Heart left ventricle (tissue), 16 donors: ENCODE measurements at regions of chr16 and their contacts with region 1.

Region 1: DNA sequence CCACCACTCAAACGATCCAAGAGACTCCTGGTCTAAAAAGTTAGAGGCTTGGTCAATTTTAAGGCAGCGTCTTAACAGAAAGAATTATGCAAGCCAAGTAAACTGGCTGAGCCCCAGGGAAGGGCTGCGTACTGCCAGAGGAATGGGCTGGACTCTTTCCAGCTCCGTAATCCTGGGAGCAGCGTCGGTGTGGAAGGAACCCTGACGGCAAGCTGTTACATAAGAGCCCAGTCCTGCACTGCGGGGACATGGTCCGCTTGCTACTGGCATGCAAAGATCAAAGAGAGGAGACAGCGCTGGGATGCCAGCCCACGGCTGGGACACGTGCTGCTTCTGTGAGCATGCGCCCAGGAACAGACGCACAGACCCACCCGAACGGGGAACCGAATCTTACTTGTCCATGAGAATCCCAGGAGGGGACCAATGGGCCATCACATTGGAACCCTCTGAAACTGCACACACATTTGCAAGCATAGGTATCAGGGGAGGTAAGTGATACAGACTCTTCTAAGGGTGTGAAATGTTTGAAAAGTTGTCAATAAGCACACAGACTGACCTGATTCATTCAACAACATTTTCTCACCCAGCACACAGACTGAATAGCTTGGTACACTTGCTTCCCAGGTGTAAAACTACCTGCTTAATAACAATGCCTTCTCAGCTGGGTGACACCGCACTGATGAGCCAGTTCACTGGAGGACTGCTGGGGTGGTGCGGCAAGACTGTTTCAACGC is 95.1 kb downstream of the ANKRD11 start:
- DNase-seq: peak; percentile 85 to 95 (median 91)
- ATAC-seq: peak; percentile 92 to 95 (median 94)
- H3K4me3 ChIP-seq: peak overlapping the region in 3 of 12 donors; percentile 0 to 30 (median 9)
- H3K27ac ChIP-seq: peak overlapping the region in 10 of 12 donors; percentile 32 to 83 (median 60)
- H3K4me1 ChIP-seq: peaks cover 15 to 72% (median 41%) of the 10 kb centered on the region in 12 donors
- H3K27me3 ChIP-seq: no peaks in the 10 kb centered on the region
- CTCF ChIP-seq: no peak
- POLR2A ChIP-seq: no peak

Region 2: GRCh38 chr16:89344846-89345611 is 50.3 kb before region 1 on chr16:
- intact Hi-C with region 1: loop called in 1 of 10 experiments (anchors 5 kb)
- DNase-seq: no peak
- ATAC-seq: peak in 3 of 4 donors; percentile 46 to 50 (median 49)
- H3K4me3 ChIP-seq: peak overlapping the region in 2 of 12 donors; percentile 4 to 27
- H3K27ac ChIP-seq: peak overlapping the region in 2 of 12 donors; percentile 5 to 47
- H3K4me1 ChIP-seq: peaks cover 3 to 46% (median 21%) of the 10 kb centered on the region in 12 donors
- H3K27me3 ChIP-seq: no peaks in the 10 kb centered on the region
- CTCF ChIP-seq: no peak
- POLR2A ChIP-seq: no peak

Region 3: DNA sequence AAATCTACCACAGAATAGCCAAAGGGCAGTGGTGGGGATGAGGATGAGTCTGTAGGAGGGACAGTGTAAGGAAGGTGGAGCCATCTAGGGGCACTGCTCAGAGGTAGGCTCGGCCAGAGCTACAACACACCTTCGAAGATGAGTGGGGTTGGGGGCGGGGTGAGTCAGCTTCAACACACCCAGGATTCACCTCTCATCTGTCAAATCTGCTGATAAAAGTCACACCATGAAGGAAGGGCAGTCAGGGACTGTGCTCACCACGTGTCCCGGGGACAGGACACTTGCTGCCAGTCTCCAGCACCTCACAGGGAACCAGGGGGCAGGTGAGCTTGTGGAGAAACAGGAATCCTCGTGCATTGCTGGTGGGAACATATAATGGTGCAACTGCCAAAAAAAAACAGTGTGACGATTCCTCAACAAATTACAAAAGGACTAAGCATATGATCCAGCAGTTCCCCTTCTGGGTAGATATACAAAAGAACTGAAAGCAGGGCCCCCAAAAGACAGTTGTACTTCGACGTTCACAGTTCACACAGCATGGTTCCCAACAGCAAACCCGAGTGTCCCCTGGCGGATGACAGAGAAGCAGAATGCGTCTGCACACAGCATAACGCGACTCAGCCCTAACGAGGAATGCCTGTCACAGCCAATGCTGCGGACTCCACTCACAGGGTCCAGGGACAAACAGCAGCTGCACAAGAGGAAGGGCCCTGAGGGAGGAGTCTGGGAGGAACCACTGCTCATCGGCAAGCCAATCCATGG is 38.1 kb before region 1 on chr16:
- intact Hi-C with region 1: loop called in 1 of 10 experiments (anchors 5 kb)
- DNase-seq: peak in 3 of 5 donors; percentile 55 to 73 (median 68)
- ATAC-seq: peak; percentile 46 to 68 (median 61)
- H3K4me3 ChIP-seq: peak overlapping the region in 1 of 12 donors; percentile 8
- H3K27ac ChIP-seq: peak overlapping the region in 4 of 12 donors; percentile 4 to 59 (median 20)
- H3K4me1 ChIP-seq: peaks cover 7 to 98% (median 92%) of the 10 kb centered on the region in 12 donors
- H3K27me3 ChIP-seq: no peaks in the 10 kb centered on the region
- CTCF ChIP-seq: peak in 5 of 12 donors; percentile 7 to 30 (median 19)
- POLR2A ChIP-seq: no peak

Region 4: GRCh38 chr16:89449726-89450335 is 54.5 kb after region 1 on chr16:
- intact Hi-C with region 1: no loop called
- DNase-seq: no peak
- ATAC-seq: no peak
- H3K4me3 ChIP-seq: no peak overlapping the region
- H3K27ac ChIP-seq: no peak overlapping the region
- H3K4me1 ChIP-seq: peaks cover 10 to 97% (median 81%) of the 10 kb centered on the region in 12 donors
- H3K27me3 ChIP-seq: no peaks in the 10 kb centered on the region
- CTCF ChIP-seq: no peak
- POLR2A ChIP-seq: no peak